A673 (cell line): ENCODE measurements at regions of chr10 and their contacts with region 1.

Region 1: GRCh38 chr10:19819419-19820033 is 3.3 kb downstream of the PLXDC2 start:
- DNase-seq: peak; percentile 84
- H3K4me3 ChIP-seq: peak overlapping the region; percentile 85
- H3K27ac ChIP-seq: peak overlapping the region; percentile 46
- H3K4me1 ChIP-seq: peaks cover 27% of the 10 kb centered on the region
- H3K27me3 ChIP-seq: no peaks in the 10 kb centered on the region
- CTCF ChIP-seq: peak; percentile 84

Region 2: GRCh38 chr10:19412531-19412930 is 407.0 kb before region 1 on chr10:
- CTCF ChIA-PET with region 1: no interaction called
- POLR2A ChIA-PET with region 1: no interaction called
- intact Hi-C with region 1: loop called (anchors 5 kb)
- DNase-seq: peak; percentile 72
- H3K4me3 ChIP-seq: no peak overlapping the region
- H3K27ac ChIP-seq: no peak overlapping the region
- H3K4me1 ChIP-seq: no peaks in the 10 kb centered on the region
- H3K27me3 ChIP-seq: no peaks in the 10 kb centered on the region
- CTCF ChIP-seq: peak; percentile 67

Region 3: DNA sequence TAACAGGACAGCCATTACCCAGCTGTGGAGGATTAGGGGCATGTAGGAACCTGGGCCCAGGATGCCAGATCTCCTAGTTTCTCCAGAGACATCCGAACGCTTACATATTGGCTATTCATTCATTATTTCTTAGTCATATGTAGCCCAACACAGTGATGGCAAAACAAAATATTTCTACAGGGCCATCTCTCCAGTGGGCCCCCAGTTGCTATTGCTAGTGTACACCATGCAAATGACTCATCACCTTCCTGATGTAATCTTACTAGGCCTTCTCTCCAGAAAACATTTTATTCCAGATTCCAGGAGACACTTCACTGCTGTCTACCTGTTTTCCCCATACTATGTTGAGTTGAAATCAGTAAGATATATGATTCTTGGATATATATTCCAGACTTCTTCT is 198.4 kb after region 1 on chr10:
- CTCF ChIA-PET with region 1: no interaction called
- POLR2A ChIA-PET with region 1: no interaction called
- intact Hi-C with region 1: loop called (anchors 2 kb)
- DNase-seq: no peak
- H3K4me3 ChIP-seq: no peak overlapping the region
- H3K27ac ChIP-seq: peak overlapping the region; percentile 37
- H3K4me1 ChIP-seq: peaks cover 30% of the 10 kb centered on the region
- H3K27me3 ChIP-seq: no peaks in the 10 kb centered on the region
- CTCF ChIP-seq: no peak

Region 4: GRCh38 chr10:20162123-20162522 is 342.6 kb after region 1 on chr10:
- CTCF ChIA-PET with region 1: no interaction called
- POLR2A ChIA-PET with region 1: interaction called, 3 read pairs
- intact Hi-C with region 1: loop called (anchors 5 kb)
- DNase-seq: peak; percentile 85
- H3K4me3 ChIP-seq: no peak overlapping the region
- H3K27ac ChIP-seq: peak overlapping the region; percentile 75
- H3K4me1 ChIP-seq: peaks cover 73% of the 10 kb centered on the region
- H3K27me3 ChIP-seq: no peaks in the 10 kb centered on the region
- CTCF ChIP-seq: no peak

Region 5: DNA sequence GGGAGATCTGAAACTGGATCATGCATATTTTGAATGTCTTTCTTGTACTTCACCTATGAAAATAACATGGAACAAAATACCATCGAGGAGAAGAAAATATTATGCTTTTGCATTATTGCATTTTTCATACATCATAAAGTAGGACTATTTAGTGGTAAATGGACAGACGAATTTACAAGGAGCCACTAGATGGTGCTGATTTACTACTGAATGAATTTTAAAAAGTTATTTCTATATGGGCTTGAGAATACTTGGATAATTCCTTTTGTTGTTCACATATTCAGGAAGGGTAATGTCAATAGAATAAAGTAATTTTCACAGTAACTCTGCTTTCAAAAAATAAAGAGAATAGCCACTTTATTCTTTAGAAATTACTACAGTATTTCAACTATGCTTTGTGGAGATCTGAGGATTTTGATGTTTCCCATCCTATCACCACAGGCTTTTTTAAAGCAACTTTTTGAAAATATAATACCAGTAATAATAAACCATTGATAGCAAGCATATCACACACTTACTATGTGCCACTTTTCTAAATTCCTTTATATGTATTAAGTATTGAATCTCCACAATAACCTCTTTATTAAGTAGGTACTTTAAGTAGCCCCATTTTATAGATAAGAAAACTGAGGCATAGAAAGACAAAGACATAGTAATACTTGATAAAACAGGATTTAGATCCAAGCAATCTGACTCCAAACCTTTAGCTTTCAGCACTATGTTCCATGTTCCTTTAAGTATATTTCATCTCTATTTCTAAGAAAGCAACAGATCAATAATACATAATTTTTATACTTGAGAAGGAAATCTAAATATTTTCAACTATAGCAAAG is 1039.0 kb after region 1 on chr10:
- CTCF ChIA-PET with region 1: interaction called, 3 read pairs
- POLR2A ChIA-PET with region 1: no interaction called
- intact Hi-C with region 1: loop called (anchors 10 kb)
- DNase-seq: peak; percentile 62
- H3K4me3 ChIP-seq: no peak overlapping the region
- H3K27ac ChIP-seq: no peak overlapping the region
- H3K4me1 ChIP-seq: peaks cover 9% of the 10 kb centered on the region
- H3K27me3 ChIP-seq: no peaks in the 10 kb centered on the region
- CTCF ChIP-seq: peak; percentile 73